ENCODE measurements at regions of chr16 and their contacts with region 1.

Region 1: GRCh38 chr16:1258906-1259759 is 3.3 kb downstream of the TPSD1 start:
- DNase-seq: no peak
- H3K4me3 ChIP-seq: peak overlapping the region in 1 of 3 experiments; percentile 14
- H3K27ac ChIP-seq: no peak overlapping the region
- H3K4me1 ChIP-seq: peaks cover 7% of the 10 kb centered on the region
- H3K27me3 ChIP-seq: peaks cover 23% of the 10 kb centered on the region
- CTCF ChIP-seq: no peak

Region 2: GRCh38 chr16:1002399-1003161 is 256.6 kb before region 1 on chr16:
- CTCF ChIA-PET with region 1: no interaction called
- dilution Hi-C with region 1: loop called (anchors 10 kb)
- in situ Hi-C with region 1: no loop called
- intact Hi-C with region 1: no loop called
- DNase-seq: peak; percentile 69
- H3K4me3 ChIP-seq: no peak overlapping the region
- H3K27ac ChIP-seq: no peak overlapping the region
- H3K4me1 ChIP-seq: peaks cover 14% of the 10 kb centered on the region
- H3K27me3 ChIP-seq: peaks cover 5% of the 10 kb centered on the region
- CTCF ChIP-seq: no peak

Region 3: GRCh38 chr16:1308977-1309885 is 50.1 kb after region 1 on chr16 and contains the start of gene UBE2I:
- CTCF ChIA-PET with region 1: no interaction called
- dilution Hi-C with region 1: loop called (anchors 10 kb)
- in situ Hi-C with region 1: no loop called
- intact Hi-C with region 1: no loop called
- DNase-seq: peak; percentile 99
- H3K4me3 ChIP-seq: peak within 1 kb of the TSS; percentile 72 to 98 (median 94)
- H3K27ac ChIP-seq: peak within 1 kb of the TSS; percentile 96
- H3K4me1 ChIP-seq: peaks cover 25% of the 10 kb centered on the region
- H3K27me3 ChIP-seq: no peaks in the 10 kb centered on the region
- CTCF ChIP-seq: no peak
- total RNA-seq, gene UBE2I: 42.7 to 157 TPM

Region 4: GRCh38 chr16:2328428-2328827 is 1069.3 kb after region 1 on chr16:
- CTCF ChIA-PET with region 1: no interaction called
- dilution Hi-C with region 1: no loop called
- in situ Hi-C with region 1: no loop called
- intact Hi-C with region 1: no loop called
- DNase-seq: no peak
- H3K4me3 ChIP-seq: no peak overlapping the region
- H3K27ac ChIP-seq: no peak overlapping the region
- H3K4me1 ChIP-seq: no peaks in the 10 kb centered on the region
- H3K27me3 ChIP-seq: peaks cover 4% of the 10 kb centered on the region
- CTCF ChIP-seq: no peak